GM12878 (cell line): ENCODE measurements at regions of chr5 and their contacts with region 1.

Region 1: GRCh38 chr5:171392585-171393159 is 5.0 kb downstream of the NPM1 start:
- DNase-seq: no peak
- ATAC-seq: peak; percentile 9; the same call in 1 of the 3 replicates
- H3K4me3 ChIP-seq: peak overlapping the region; percentile 25; the same call in 1 of the 2 replicates
- H3K27ac ChIP-seq: no peak overlapping the region
- H3K4me1 ChIP-seq: peaks cover 5% of the 10 kb centered on the region
- H3K27me3 ChIP-seq: no peaks in the 10 kb centered on the region
- CTCF ChIP-seq: 0 out of 6 replicates have a peak, but pooled peaks of 1 of the 3 experiments have one; percentile 11
- EP300 ChIP-seq: no peak
- POLR2A ChIP-seq: no peak
- RAD21 ChIP-seq: no peak

Region 2: DNA sequence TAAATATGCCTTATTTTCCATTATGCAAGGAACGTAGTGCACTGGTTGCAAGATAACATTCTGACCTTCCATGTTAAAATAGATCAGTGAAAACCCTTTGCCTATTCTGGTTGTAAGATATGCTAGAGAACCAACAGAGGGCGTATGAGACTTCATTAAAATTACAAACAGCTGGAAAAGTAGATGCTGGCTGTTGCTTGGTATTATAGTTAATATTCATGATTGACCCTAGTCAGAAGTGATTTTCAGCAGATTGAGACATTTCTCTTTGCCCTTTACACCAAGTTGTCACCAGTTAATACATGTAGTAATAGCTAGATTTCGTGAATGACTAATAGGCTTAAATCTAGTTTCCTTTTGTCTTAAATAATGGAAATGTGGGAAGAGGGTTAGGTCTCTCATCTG is 12.9 kb after region 1 on chr5:
- CTCF ChIA-PET with region 1: interaction called, 11 read pairs
- POLR2A ChIA-PET with region 1: interaction called, 11 read pairs
- RAD21 ChIA-PET with region 1: interaction called, 3 read pairs
- SMC1A ChIA-PET with region 1: interaction called, 3 read pairs
- in situ Hi-C with region 1: no loop called
- intact Hi-C with region 1: no loop called
- DNase-seq: no peak
- ATAC-seq: peak; percentile 61
- H3K4me3 ChIP-seq: no peak overlapping the region
- H3K27ac ChIP-seq: no peak overlapping the region
- H3K4me1 ChIP-seq: no peaks in the 10 kb centered on the region
- H3K27me3 ChIP-seq: no peaks in the 10 kb centered on the region
- CTCF ChIP-seq: peak; percentile 18 to 36 (median 32); a peak in 2 of 6 replicates
- EP300 ChIP-seq: no peak
- POLR2A ChIP-seq: no peak
- RAD21 ChIP-seq: no peak